ENCODE measurements at regions of chr2 and their contacts with region 1.

Region 1: DNA sequence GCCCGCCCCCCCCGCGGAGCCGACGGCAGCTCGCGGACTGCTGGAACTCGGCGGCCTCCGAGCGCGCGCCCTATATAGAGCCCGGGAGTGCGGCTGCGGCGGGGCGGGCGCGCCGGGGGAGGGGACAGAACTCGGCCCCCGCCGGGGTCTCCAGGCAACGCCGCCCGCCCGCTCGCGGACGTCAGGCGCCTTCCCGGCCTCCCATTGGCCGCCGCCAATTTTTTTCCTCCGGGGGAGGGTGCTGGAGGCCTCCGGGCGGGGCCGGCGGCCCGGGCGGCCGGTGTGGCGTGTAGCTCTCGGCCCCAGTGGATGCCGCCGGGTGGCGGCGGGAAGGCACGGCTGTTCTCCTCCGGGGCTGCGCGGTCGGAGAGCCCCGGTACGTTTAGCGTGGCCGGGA is at the start of gene ZFP36L2:
- DNase-seq: peak; percentile 95
- ATAC-seq: peak; percentile 72
- H3K4me3 Mint-ChIP-seq: peak within 1 kb of the TSS; percentile 94
- H3K27ac Mint-ChIP-seq: peak within 1 kb of the TSS; percentile 95
- H3K4me1 Mint-ChIP-seq: peaks cover 34% of the 10 kb centered on the region
- H3K27me3 Mint-ChIP-seq: no peaks in the 10 kb centered on the region
- CTCF ChIP-seq: no peak
- total RNA-seq, gene ZFP36L2: 102 to 106 TPM

Region 2: GRCh38 chr2:42944779-42945415 is 281.7 kb before region 1 on chr2:
- CTCF ChIA-PET with region 1: interaction called, 76 read pairs
- POLR2A ChIA-PET with region 1: interaction called, 4 read pairs
- intact Hi-C with region 1: loop called (anchors 2 kb)
- DNase-seq: no peak
- ATAC-seq: no peak
- H3K4me3 Mint-ChIP-seq: no peak overlapping the region
- H3K27ac Mint-ChIP-seq: no peak overlapping the region
- H3K4me1 Mint-ChIP-seq: peaks cover 2% of the 10 kb centered on the region
- H3K27me3 Mint-ChIP-seq: no peaks in the 10 kb centered on the region
- CTCF ChIP-seq: no peak

Region 3: GRCh38 chr2:43032213-43033015 is 194.1 kb before region 1 on chr2:
- CTCF ChIA-PET with region 1: interaction called, 13 read pairs
- POLR2A ChIA-PET with region 1: no interaction called
- intact Hi-C with region 1: no loop called
- DNase-seq: no peak
- ATAC-seq: no peak
- H3K4me3 Mint-ChIP-seq: no peak overlapping the region
- H3K27ac Mint-ChIP-seq: no peak overlapping the region
- H3K4me1 Mint-ChIP-seq: peaks cover 13% of the 10 kb centered on the region
- H3K27me3 Mint-ChIP-seq: no peaks in the 10 kb centered on the region
- CTCF ChIP-seq: no peak

Region 4: DNA sequence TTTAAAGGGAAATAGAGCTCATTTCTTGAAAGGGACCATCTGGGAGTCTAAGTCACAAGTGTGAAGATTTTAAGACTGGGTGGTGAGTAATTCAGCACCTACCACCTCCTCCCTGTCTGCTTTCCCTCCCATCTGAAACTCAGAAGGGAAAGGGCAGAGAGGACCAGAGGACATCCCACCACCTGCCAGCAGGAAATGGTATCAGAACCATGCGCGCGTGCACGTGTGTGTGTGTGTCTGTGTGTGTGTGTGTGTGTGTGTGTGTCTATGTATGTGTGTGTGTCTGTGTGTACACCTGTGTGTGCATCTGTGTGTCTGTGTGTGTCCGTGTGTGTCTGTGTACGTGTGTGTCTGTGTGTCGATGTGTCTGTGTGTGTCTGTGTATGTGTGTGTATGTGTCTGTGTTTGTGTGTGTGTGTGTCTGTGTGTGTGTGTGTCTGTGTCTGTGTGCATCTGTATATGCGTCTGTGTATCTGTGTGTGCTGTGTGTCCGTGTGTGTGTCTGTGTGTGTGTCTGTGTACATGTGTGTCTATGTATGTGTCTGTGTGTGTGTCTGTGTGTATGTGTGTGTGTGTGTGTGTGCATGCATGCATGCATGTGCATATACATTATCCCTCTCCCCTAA is 77.0 kb before region 1 on chr2:
- CTCF ChIA-PET with region 1: interaction called, 647 read pairs
- POLR2A ChIA-PET with region 1: interaction called, 23 read pairs
- intact Hi-C with region 1: no loop called
- DNase-seq: peak; percentile 88
- ATAC-seq: peak; percentile 94
- H3K4me3 Mint-ChIP-seq: peak overlapping the region; percentile 50
- H3K27ac Mint-ChIP-seq: peak overlapping the region; percentile 89
- H3K4me1 Mint-ChIP-seq: peaks cover 66% of the 10 kb centered on the region
- H3K27me3 Mint-ChIP-seq: no peaks in the 10 kb centered on the region
- CTCF ChIP-seq: no peak

Region 5: DNA sequence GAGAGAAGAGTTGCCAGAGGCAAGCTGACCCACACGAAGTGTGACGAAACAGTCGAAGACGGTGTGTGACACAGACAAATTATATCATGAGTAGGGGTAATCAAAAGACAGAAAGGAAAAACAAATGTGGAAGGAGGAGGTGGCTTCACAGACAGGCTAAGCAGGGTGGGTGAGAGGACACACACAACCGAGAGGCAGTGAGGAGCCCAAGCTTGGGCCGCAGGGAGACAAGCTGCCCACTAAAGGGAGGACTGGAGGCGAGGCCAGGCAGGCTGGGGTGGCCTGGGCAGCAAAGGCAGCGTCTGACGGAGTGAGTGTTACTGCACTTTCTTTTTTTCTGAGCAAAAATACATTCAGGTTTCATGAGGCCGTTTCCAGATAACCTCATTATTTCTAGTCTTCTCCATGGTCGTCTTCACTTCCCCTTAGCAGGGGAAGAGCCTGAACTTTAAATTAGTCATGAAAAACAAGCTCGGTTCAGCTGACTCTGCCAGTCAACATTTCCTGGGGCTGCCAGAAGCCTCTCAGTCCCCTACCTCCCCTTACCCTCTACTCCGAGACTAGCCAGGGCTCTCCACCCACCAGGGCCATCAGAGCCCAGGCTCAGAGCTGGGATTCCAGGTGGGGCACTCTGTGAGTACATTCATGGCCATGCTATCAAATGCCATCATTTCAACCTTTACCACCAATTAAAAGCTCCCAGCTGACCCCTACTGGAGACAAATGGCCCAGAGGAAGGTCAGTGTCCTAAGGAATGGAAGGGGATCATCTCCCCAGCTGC is 13.6 kb after region 1 on chr2:
- CTCF ChIA-PET with region 1: interaction called, 19 read pairs
- POLR2A ChIA-PET with region 1: no interaction called
- intact Hi-C with region 1: no loop called
- DNase-seq: no peak
- ATAC-seq: no peak
- H3K4me3 Mint-ChIP-seq: no peak overlapping the region
- H3K27ac Mint-ChIP-seq: no peak overlapping the region
- H3K4me1 Mint-ChIP-seq: peaks cover 10% of the 10 kb centered on the region
- H3K27me3 Mint-ChIP-seq: no peaks in the 10 kb centered on the region
- CTCF ChIP-seq: no peak

Measured in activated CD8-positive, alpha-beta T cell treated with anti-CD3 and anti-CD28 coated beads for 36 hours (primary cell).